ENCODE measurements at regions of chr14 and their contacts with region 1.

Region 1: GRCh38 chr14:34722717-34723545 is 8.5 kb upstream of the CFL2 start:
- DNase-seq: peak; percentile 37
- H3K4me3 Mint-ChIP-seq: no peak overlapping the region
- H3K27ac Mint-ChIP-seq: no peak overlapping the region
- H3K4me1 Mint-ChIP-seq: no peaks in the 10 kb centered on the region
- H3K27me3 Mint-ChIP-seq: no peaks in the 10 kb centered on the region
- CTCF ChIP-seq: peak; percentile 60

Region 2: GRCh38 chr14:34671716-34672115 is 51.2 kb before region 1 on chr14:
- CTCF ChIA-PET with region 1: interaction called, 7 read pairs
- intact Hi-C with region 1: loop called (anchors 1 kb)
- DNase-seq: no peak
- H3K4me3 Mint-ChIP-seq: no peak overlapping the region
- H3K27ac Mint-ChIP-seq: no peak overlapping the region
- H3K4me1 Mint-ChIP-seq: no peaks in the 10 kb centered on the region
- H3K27me3 Mint-ChIP-seq: no peaks in the 10 kb centered on the region
- CTCF ChIP-seq: no peak

Region 3: DNA sequence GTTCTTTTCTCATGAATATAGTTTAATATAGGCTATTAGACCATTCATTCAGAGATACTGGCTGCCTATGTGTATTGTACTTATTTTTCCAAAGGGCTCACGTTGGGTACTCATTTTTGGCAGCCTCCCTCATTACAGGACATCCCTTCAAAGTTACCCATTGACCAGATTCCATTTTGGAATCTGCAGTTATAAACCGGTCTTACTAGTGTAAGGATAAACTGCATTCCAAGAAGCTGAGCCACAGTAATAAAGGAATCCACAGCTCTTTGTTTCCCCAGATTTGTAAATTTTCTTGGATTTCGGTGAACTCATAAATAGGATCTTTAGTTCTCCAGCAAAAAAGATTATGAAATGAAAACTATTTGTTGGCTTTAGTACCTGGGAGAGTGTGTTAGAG is 10.3 kb after region 1 on chr14:
- CTCF ChIA-PET with region 1: interaction called, 17 read pairs
- intact Hi-C with region 1: no loop called
- DNase-seq: peak; percentile 6
- H3K4me3 Mint-ChIP-seq: peak overlapping the region; percentile 13
- H3K27ac Mint-ChIP-seq: peak overlapping the region; percentile 73
- H3K4me1 Mint-ChIP-seq: peaks cover 32% of the 10 kb centered on the region
- H3K27me3 Mint-ChIP-seq: no peaks in the 10 kb centered on the region
- CTCF ChIP-seq: no peak